G401 (cell line): ENCODE measurements at regions of chr16 and their contacts with region 1.

Region 1: GRCh38 chr16:67674851-67675608 is 8.4 kb downstream of the C16orf86 start:
- DNase-seq: peak; percentile 56

Region 2: DNA sequence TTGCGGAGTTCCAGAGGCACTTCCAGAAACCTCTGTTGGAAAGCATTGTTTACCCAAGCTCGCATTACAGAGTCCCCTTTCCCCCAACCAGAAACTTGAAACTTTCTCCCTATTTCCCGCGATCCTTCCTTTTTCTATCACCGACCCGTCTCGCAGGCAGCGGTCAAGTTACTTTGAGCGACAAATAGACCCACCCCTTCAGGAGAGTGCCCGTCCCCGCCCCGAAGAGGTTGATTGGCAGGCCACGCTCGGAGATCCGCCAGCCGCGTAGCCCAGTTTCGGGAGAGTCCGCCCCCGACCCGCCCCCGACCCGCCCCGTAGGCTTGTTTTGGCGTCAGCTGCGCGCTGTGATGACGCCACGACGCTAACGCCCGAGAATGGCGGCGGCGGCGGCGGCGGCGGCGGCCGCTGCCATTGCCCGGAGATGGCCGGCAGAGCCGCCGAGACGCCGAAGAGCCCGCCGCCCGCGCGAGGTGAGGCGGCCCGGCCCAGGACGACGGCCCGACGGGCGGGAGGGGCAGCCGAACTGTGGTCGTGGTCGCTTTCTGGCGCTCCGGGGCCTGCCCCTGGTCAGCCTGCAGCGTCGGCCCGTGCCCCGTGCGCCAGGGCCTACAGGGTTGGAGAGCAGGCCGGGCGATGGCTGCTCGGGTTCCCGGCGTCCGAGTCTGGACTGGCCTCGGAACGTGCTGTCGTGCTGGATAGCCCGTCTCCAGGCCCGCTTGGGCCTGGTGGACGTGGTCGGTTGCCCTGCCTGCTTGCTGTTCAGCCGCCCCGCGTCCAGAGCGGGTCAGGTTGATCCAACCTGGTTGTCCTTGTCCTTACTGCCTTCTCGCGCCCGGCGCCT is 218.1 kb after region 1 on chr16 and contains the start of gene PSKH1:
- in situ Hi-C with region 1: loop called (anchors 25 kb)
- DNase-seq: peak; percentile 98
- total RNA-seq, gene PSKH1: 34.4 and 40.8 TPM in 2 replicates